ENCODE measurements at regions of chr14 and their contacts with region 1.

Region 1: DNA sequence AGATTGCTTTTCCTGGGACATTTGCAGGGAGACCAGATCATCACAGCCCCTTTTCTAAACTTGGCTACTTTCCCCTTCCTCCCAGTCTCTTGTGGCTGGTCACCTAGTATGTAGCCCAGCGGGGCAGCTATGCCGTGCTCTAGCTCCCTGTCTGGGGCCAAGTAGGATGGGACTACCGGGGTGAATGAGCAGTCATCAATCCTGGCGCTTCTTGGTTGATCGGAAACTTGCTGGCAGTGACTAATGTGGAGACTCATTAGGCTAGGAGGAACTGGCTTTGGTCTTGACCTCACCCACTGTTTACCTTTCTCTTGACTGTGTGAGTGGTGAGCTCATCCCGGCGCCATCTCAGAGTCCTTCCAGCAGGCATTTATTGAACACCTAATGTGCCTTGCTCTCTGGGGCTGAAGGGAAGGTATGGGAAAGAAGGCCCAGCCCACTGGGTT is 15.9 kb downstream of the PLEKHG3 start:
- DNase-seq: no peak
- ATAC-seq: no peak
- H3K4me3 ChIP-seq: no peak overlapping the region
- H3K27ac ChIP-seq: peak overlapping the region in 4 of 10 donors; percentile 5 to 81 (median 32)
- H3K4me1 ChIP-seq: peaks cover 22 to 97% (median 67%) of the 10 kb centered on the region in 9 donors
- H3K27me3 ChIP-seq: no peaks in the 10 kb centered on the region
- CTCF ChIP-seq: no peak

Region 2: GRCh38 chr14:64681796-64682710 is 38.1 kb before region 1 on chr14:
- intact Hi-C with region 1: loop called in 2 of 10 experiments (anchors 5 kb)
- DNase-seq: peak; percentile 71 to 77
- ATAC-seq: peak; percentile 70 to 94 (median 90)
- H3K4me3 ChIP-seq: no peak overlapping the region
- H3K27ac ChIP-seq: peak overlapping the region; percentile 45 to 86 (median 82)
- H3K4me1 ChIP-seq: peaks cover 8 to 49% (median 27%) of the 10 kb centered on the region in 9 donors
- H3K27me3 ChIP-seq: no peaks in the 10 kb centered on the region
- CTCF ChIP-seq: no peak

Region 3: DNA sequence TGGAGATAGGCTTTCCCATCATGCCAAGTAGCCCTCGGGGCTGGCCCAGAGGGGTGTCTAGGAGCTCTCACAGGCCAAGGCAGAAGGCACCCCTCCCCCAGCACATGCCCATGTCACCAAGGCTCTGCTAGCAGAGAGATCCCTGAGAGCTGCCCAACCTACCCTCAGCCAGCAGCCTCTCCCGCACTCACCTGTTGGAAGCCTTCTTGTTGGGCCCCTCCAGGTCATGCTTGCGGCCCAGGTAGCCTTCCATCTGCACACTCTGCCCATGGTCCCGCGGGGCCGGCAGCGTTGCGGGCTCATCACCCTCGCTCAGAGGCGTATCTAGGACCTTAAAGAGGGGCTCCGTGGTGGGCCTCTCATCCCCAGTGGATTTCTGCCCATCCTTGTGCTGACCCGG is 33.2 kb after region 1 on chr14:
- intact Hi-C with region 1: loop called in 2 of 10 experiments (anchors 5 kb)
- DNase-seq: no peak
- ATAC-seq: no peak
- H3K4me3 ChIP-seq: no peak overlapping the region
- H3K27ac ChIP-seq: no peak overlapping the region
- H3K4me1 ChIP-seq: peaks cover 10 to 32% (median 15%) of the 10 kb centered on the region in 9 donors
- H3K27me3 ChIP-seq: no peaks in the 10 kb centered on the region
- CTCF ChIP-seq: no peak

Region 4: GRCh38 chr14:64758691-64759584 is 38.8 kb after region 1 on chr14:
- intact Hi-C with region 1: loop called in 3 of 10 experiments (anchors 5 kb)
- DNase-seq: peak in 1 of 2 donors; percentile 60
- ATAC-seq: peak in 6 of 8 donors; percentile 25 to 57 (median 50)
- H3K4me3 ChIP-seq: no peak overlapping the region
- H3K27ac ChIP-seq: peak overlapping the region in 9 of 10 donors; percentile 16 to 88 (median 76)
- H3K4me1 ChIP-seq: peaks cover 45 to 88% (median 68%) of the 10 kb centered on the region in 9 donors
- H3K27me3 ChIP-seq: no peaks in the 10 kb centered on the region
- CTCF ChIP-seq: no peak

Measured in heart right ventricle (tissue), 16 donors.